Naive thymus-derived CD4-positive, alpha-beta T cell (primary cell): ENCODE measurements at regions of chr18 and their contacts with region 1.

Region 1: DNA sequence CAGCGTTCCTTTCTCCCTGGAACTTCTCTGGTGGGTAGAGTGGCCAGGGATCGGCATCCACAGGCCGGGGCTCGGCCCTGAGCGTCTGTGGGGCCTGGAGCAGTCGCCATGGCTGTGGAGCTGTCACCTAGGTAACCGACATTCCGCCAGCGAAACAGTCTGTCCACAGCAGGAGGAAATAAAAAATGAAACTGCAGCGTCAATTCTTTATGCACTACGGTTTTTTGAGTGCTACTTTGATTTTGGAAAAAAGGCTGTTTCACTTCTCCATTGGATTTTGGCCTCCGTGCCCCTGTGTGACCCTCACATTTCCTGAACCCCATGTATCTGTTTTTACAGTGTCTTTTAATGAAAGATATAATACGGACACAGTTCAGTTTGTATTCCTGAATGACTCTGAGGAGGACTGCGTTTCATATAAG is 163.4 kb downstream of the LDLRAD4 start:
- DNase-seq: peak in 7 of 9 donors; percentile 51 to 67 (median 62)
- ATAC-seq: peak; percentile 67
- H3K4me3 ChIP-seq: peak overlapping the region; percentile 57
- H3K4me3 Mint-ChIP-seq: peak overlapping the region; percentile 83 to 94 (median 92)
- H3K27ac ChIP-seq: peak overlapping the region; percentile 93
- H3K27ac Mint-ChIP-seq: peak overlapping the region; percentile 97 to 100 (median 99)
- H3K4me1 ChIP-seq: peaks cover 18 to 54% of the 10 kb centered on the region in 2 donors
- H3K4me1 Mint-ChIP-seq: peaks cover 41 to 83% (median 79%) of the 10 kb centered on the region in 7 donors
- H3K27me3 ChIP-seq: no peaks in the 10 kb centered on the region
- H3K27me3 Mint-ChIP-seq: no peaks in the 10 kb centered on the region

Region 2: GRCh38 chr18:13235981-13236380 is 146.0 kb before region 1 on chr18:
- CTCF ChIA-PET with region 1: no interaction called
- POLR2A ChIA-PET with region 1: no interaction called
- intact Hi-C with region 1: no loop called
- DNase-seq: no peak
- ATAC-seq: no peak
- H3K4me3 ChIP-seq: no peak overlapping the region
- H3K4me3 Mint-ChIP-seq: no peak overlapping the region
- H3K27ac ChIP-seq: no peak overlapping the region
- H3K27ac Mint-ChIP-seq: no peak overlapping the region
- H3K4me1 ChIP-seq: no peaks in the 10 kb centered on the region
- H3K4me1 Mint-ChIP-seq: peaks cover 0 to 12% (median 0%) of the 10 kb centered on the region in 7 donors
- H3K27me3 ChIP-seq: no peaks in the 10 kb centered on the region
- H3K27me3 Mint-ChIP-seq: no peaks in the 10 kb centered on the region

Region 3: GRCh38 chr18:13268158-13269012 is 113.6 kb before region 1 on chr18:
- CTCF ChIA-PET with region 1: no interaction called
- POLR2A ChIA-PET with region 1: interaction called, 4 read pairs
- intact Hi-C with region 1: loop called (anchors 2 to 5 kb)
- DNase-seq: no peak
- ATAC-seq: no peak
- H3K4me3 ChIP-seq: no peak overlapping the region
- H3K4me3 Mint-ChIP-seq: peak overlapping the region in 8 of 10 donors; percentile 3 to 68 (median 26)
- H3K27ac ChIP-seq: no peak overlapping the region
- H3K27ac Mint-ChIP-seq: peak overlapping the region in 8 of 9 donors; percentile 65 to 89 (median 83)
- H3K4me1 ChIP-seq: peaks cover 0 to 49% of the 10 kb centered on the region in 2 donors
- H3K4me1 Mint-ChIP-seq: peaks cover 24 to 84% (median 65%) of the 10 kb centered on the region in 7 donors
- H3K27me3 ChIP-seq: no peaks in the 10 kb centered on the region
- H3K27me3 Mint-ChIP-seq: peaks cover 0 to 4% (median 0%) of the 10 kb centered on the region in 5 donors

Region 4: DNA sequence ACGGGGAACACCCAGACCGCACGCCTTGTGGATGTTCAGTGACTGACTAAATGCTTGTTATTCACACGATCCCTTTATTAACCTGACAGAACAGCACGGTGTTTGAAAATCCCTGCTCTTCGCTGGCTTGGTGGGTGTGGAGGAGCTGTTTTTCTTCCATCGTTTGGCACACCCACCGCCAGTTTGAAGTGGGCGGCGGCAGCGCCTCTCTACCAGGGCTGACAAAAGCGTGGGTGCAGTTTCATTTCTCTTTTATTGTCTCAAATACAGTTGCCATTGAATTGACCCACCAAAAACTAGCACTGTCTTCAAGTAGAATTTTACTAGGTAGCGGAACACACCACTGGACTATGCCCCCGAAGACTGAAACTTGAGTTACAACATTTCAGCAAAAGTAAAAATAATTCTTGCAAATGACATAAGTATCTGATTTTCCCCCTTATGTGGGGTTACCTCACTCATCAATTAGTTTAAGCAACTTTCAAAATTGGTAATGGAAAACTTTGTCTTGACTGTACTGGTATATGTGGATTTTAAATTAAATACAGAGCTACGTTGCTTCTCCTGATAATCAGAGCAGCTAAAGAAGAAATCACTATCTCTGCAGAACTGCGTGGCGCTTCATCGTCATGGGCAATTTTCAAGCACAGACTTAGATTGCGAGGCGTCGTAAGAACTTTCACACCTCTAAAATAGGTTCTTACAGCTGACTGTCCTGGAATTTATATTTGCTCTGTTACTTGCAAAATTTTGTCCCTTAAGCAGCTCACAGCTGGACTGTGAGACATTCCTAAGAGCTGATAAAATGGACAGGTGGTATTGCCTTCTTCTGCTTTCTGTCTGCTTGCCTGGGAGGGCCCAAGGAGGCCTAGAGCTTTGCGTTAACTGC is 102.5 kb before region 1 on chr18:
- CTCF ChIA-PET with region 1: no interaction called
- POLR2A ChIA-PET with region 1: interaction called, 3 read pairs
- intact Hi-C with region 1: loop called in 1 of 2 experiments (anchors 2 kb)
- DNase-seq: peak in 8 of 9 donors; percentile 26 to 52 (median 40)
- ATAC-seq: peak; percentile 61
- H3K4me3 ChIP-seq: peak overlapping the region; percentile 27
- H3K4me3 Mint-ChIP-seq: peak overlapping the region; percentile 72 to 91 (median 85)
- H3K27ac ChIP-seq: peak overlapping the region; percentile 66
- H3K27ac Mint-ChIP-seq: peak overlapping the region; percentile 63 to 94 (median 89)
- H3K4me1 ChIP-seq: peaks cover 2 to 19% of the 10 kb centered on the region in 2 donors
- H3K4me1 Mint-ChIP-seq: peaks cover 9 to 84% (median 71%) of the 10 kb centered on the region in 7 donors
- H3K27me3 ChIP-seq: no peaks in the 10 kb centered on the region
- H3K27me3 Mint-ChIP-seq: no peaks in the 10 kb centered on the region

Region 5: GRCh38 chr18:13435596-13436327 is 53.8 kb after region 1 on chr18:
- CTCF ChIA-PET with region 1: no interaction called
- POLR2A ChIA-PET with region 1: interaction called, 3 read pairs
- intact Hi-C with region 1: loop called (anchors 1 to 2 kb)
- DNase-seq: no peak
- ATAC-seq: no peak
- H3K4me3 ChIP-seq: no peak overlapping the region
- H3K4me3 Mint-ChIP-seq: peak overlapping the region in 8 of 10 donors; percentile 12 to 91 (median 31)
- H3K27ac ChIP-seq: no peak overlapping the region
- H3K27ac Mint-ChIP-seq: peak overlapping the region in 8 of 9 donors; percentile 6 to 95 (median 92)
- H3K4me1 ChIP-seq: peaks cover 12 to 43% of the 10 kb centered on the region in 2 donors
- H3K4me1 Mint-ChIP-seq: peaks cover 31 to 65% (median 57%) of the 10 kb centered on the region in 7 donors
- H3K27me3 ChIP-seq: no peaks in the 10 kb centered on the region
- H3K27me3 Mint-ChIP-seq: no peaks in the 10 kb centered on the region

Region 6: DNA sequence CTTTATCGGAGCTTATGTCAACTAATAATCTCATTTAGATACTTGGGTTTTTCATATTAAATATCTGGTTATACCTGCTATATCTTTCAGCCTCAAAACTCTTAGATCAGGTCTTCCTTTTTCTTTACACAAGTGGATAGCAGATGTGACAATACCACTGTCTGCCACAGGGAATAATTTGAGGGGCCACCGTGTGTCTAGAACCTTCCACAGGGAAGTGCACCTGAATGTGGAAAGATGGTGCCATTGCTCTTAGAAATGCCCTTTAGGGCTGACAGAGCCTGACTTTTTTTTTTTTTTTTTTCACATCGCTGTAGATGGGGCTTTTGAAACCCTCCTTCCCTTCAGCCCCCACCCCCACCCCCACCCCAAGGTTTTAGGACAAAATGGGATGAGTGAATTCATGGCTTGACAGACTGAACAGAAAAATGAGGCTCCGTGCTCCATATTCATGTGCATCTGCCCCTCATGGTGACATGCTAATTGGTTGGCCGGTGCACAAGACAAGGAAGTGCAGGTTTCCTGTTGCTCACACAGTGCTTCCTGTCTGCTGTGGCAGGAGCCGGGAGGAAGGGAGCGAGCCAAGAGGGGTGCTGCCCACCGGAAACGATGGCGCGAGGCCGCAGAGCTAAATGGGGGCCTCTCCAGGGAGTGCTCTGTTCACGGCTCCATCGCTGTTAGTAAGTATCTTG is 82.6 kb after region 1 on chr18:
- CTCF ChIA-PET with region 1: interaction called, 3 read pairs
- POLR2A ChIA-PET with region 1: interaction called, 7 read pairs
- intact Hi-C with region 1: loop called (anchors 2 kb)
- DNase-seq: peak; percentile 37 to 70 (median 64)
- ATAC-seq: peak; percentile 93
- H3K4me3 ChIP-seq: peak overlapping the region; percentile 66
- H3K4me3 Mint-ChIP-seq: peak overlapping the region; percentile 87 to 100 (median 94)
- H3K27ac ChIP-seq: peak overlapping the region; percentile 66
- H3K27ac Mint-ChIP-seq: peak overlapping the region; percentile 88 to 99 (median 95)
- H3K4me1 ChIP-seq: peaks cover 16 to 45% of the 10 kb centered on the region in 2 donors
- H3K4me1 Mint-ChIP-seq: peaks cover 43 to 85% (median 83%) of the 10 kb centered on the region in 7 donors
- H3K27me3 ChIP-seq: no peaks in the 10 kb centered on the region
- H3K27me3 Mint-ChIP-seq: no peaks in the 10 kb centered on the region

Region 7: GRCh38 chr18:13539050-13539449 is 157.1 kb after region 1 on chr18:
- CTCF ChIA-PET with region 1: no interaction called
- POLR2A ChIA-PET with region 1: no interaction called
- intact Hi-C with region 1: loop called in 1 of 2 experiments (anchors 2 kb)
- DNase-seq: peak in 7 of 9 donors; percentile 68 to 86 (median 79)
- ATAC-seq: peak; percentile 92
- H3K4me3 ChIP-seq: no peak overlapping the region
- H3K4me3 Mint-ChIP-seq: peak overlapping the region; percentile 70 to 85 (median 74)
- H3K27ac ChIP-seq: peak overlapping the region; percentile 66
- H3K27ac Mint-ChIP-seq: peak overlapping the region; percentile 64 to 97 (median 90)
- H3K4me1 ChIP-seq: peaks cover 11 to 36% of the 10 kb centered on the region in 2 donors
- H3K4me1 Mint-ChIP-seq: peaks cover 28 to 80% (median 70%) of the 10 kb centered on the region in 7 donors
- H3K27me3 ChIP-seq: no peaks in the 10 kb centered on the region
- H3K27me3 Mint-ChIP-seq: no peaks in the 10 kb centered on the region

Region 8: GRCh38 chr18:13566941-13567746 is 185.2 kb after region 1 on chr18:
- CTCF ChIA-PET with region 1: no interaction called
- POLR2A ChIA-PET with region 1: no interaction called
- intact Hi-C with region 1: loop called in 1 of 2 experiments (anchors 5 kb)
- DNase-seq: peak in 2 of 9 donors; percentile 9 to 20
- ATAC-seq: peak; percentile 75
- H3K4me3 ChIP-seq: no peak overlapping the region
- H3K4me3 Mint-ChIP-seq: peak overlapping the region in 8 of 10 donors; percentile 7 to 56 (median 22)
- H3K27ac ChIP-seq: no peak overlapping the region
- H3K27ac Mint-ChIP-seq: peak overlapping the region in 4 of 9 donors; percentile 43 to 84 (median 60)
- H3K4me1 ChIP-seq: peaks cover 0 to 6% of the 10 kb centered on the region in 2 donors
- H3K4me1 Mint-ChIP-seq: peaks cover 21 to 67% (median 43%) of the 10 kb centered on the region in 7 donors
- H3K27me3 ChIP-seq: no peaks in the 10 kb centered on the region
- H3K27me3 Mint-ChIP-seq: no peaks in the 10 kb centered on the region